ENCODE measurements at regions of chr11 and their contacts with region 1.

Region 1: DNA sequence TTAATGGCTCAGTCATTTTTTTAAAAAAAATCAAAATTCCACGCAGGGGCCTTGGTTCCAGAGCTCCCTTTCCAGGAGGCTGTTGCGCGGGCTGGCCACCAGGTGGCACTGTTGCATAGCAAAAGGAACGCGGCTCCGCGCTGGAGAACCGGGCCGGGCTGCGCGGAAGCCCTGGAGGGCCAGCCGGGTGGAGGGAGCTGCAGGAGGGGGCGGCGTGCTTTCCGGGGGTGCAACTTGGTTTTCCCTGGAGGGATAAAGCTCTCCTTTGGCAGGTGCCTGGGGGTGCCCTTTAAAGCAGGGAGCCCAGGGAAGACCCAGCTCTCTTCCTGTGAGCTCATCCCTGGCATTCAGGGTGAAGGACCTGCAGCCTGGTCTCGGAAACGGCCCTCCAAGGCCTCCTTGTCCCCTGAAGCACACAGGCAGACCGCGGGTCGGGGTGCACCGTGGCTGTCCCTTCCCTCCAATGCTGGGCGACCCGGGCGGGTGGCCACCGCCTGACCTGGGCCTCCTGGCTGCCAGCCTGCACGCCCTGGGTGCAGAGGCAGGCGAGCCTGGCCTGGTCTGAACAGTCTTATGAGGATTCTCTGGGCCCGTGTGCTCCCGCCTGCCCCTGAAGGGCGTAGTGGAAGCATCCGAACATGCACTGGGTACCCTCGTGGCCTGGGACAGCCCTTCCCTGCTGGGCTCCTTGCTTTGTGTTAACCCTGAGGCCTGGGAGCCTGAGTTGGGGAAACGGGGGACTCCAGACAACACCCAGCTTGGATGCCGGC is 23.4 kb downstream of the KRTAP5-5 start:
- DNase-seq: peak; percentile 78
- ATAC-seq: peak; percentile 91
- H3K4me3 ChIP-seq: no peak overlapping the region
- H3K4me3 Mint-ChIP-seq: no peak overlapping the region
- H3K27ac ChIP-seq: no peak overlapping the region
- H3K27ac Mint-ChIP-seq: no peak overlapping the region
- H3K4me1 ChIP-seq: peaks cover 0 to 6% of the 10 kb centered on the region in 2 donors
- H3K4me1 Mint-ChIP-seq: no peaks in the 10 kb centered on the region
- H3K27me3 ChIP-seq: peaks cover 0 to 22% (median 4%) of the 10 kb centered on the region in 4 experiments
- H3K27me3 Mint-ChIP-seq: peaks cover 39% of the 10 kb centered on the region
- CTCF ChIP-seq: peak; percentile 97

Region 2: GRCh38 chr11:1546536-1547400 is 106.2 kb before region 1 on chr11:
- CTCF ChIA-PET with region 1: interaction called, 13 read pairs
- POLR2A ChIA-PET with region 1: no interaction called
- intact Hi-C with region 1: no loop called
- DNase-seq: peak; percentile 74
- ATAC-seq: peak; percentile 63
- H3K4me3 ChIP-seq: peak overlapping the region in 3 of 5 experiments; percentile 36 to 59 (median 47)
- H3K4me3 Mint-ChIP-seq: peak overlapping the region; percentile 59
- H3K27ac ChIP-seq: no peak overlapping the region
- H3K27ac Mint-ChIP-seq: no peak overlapping the region
- H3K4me1 ChIP-seq: peaks cover 23 to 27% of the 10 kb centered on the region in 2 donors
- H3K4me1 Mint-ChIP-seq: peaks cover 16% of the 10 kb centered on the region
- H3K27me3 ChIP-seq: peaks cover 0 to 58% (median 17%) of the 10 kb centered on the region in 4 experiments
- H3K27me3 Mint-ChIP-seq: peaks cover 12% of the 10 kb centered on the region
- CTCF ChIP-seq: peak; percentile 77

Region 3: DNA sequence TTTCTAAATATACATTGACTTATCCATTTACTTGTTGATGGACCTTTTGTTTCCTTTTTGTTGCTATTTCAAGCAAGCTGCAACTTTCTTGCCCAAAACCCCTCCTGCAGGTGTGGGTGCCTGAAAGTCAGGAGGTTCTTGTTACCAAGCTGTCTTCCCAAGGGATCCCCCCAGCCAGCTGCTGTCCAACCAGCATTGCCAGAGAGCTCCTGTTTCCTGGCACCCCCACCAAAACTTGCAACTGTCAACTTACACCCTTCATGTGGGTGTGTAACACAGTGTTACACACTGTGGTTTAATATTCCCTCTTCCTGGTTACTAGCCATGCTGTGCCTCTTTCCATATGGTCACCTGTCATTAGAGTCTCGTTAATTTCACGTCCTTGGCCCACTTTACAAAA is 66.3 kb before region 1 on chr11:
- CTCF ChIA-PET with region 1: no interaction called
- POLR2A ChIA-PET with region 1: no interaction called
- intact Hi-C with region 1: no loop called
- DNase-seq: no peak
- ATAC-seq: no peak
- H3K4me3 ChIP-seq: no peak overlapping the region
- H3K4me3 Mint-ChIP-seq: no peak overlapping the region
- H3K27ac ChIP-seq: no peak overlapping the region
- H3K27ac Mint-ChIP-seq: peak overlapping the region; percentile 59
- H3K4me1 ChIP-seq: peaks cover 8 to 34% of the 10 kb centered on the region in 2 donors
- H3K4me1 Mint-ChIP-seq: peaks cover 25% of the 10 kb centered on the region
- H3K27me3 ChIP-seq: peaks cover 0 to 28% (median 1%) of the 10 kb centered on the region in 4 experiments
- H3K27me3 Mint-ChIP-seq: peaks cover 17% of the 10 kb centered on the region
- CTCF ChIP-seq: no peak

Region 4: DNA sequence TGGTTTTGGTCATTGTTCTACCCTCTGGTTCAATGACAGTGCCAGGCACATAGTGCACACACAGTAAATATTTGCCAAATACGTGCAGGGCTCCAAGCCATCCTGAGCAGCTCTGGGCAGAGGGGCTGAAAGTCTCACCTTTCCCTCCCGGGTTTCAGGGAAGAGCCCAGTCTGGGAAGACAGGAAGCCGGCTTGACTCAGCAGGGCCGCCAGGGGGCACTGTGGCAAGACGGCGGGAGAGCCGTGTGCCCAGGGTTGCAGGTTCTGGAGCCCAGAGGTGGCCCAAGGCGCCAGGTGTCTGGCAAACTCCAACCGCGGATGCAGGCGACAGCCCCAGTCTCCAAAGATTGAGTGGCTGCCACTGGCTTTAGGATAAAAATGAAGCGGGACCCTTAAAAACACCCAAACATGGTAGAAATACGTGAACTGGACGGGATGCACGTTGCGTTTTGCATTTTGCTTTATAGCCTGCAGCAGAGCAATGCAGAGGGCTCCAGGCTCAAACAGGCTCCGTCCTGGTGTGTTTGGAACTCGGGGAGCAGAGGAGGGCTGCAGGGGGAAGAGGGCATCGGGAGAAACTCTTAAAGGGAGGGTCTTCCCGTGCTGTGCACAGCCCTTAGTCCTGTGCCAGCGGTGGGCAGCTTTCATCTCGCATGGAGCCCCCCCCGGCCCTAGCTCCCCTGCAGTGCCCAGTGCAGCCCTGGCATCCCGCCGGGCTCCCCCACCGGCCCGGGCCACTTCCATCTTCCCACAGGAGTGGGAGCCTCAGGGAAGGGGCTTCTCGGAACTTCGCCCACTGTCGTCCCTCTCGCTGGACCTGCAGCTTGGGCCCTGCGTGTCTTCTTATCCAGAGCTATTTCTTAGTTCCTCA is 12.6 kb before region 1 on chr11:
- CTCF ChIA-PET with region 1: interaction called, 18 read pairs
- POLR2A ChIA-PET with region 1: no interaction called
- intact Hi-C with region 1: no loop called
- DNase-seq: peak; percentile 47
- ATAC-seq: no peak
- H3K4me3 ChIP-seq: no peak overlapping the region
- H3K4me3 Mint-ChIP-seq: no peak overlapping the region
- H3K27ac ChIP-seq: no peak overlapping the region
- H3K27ac Mint-ChIP-seq: no peak overlapping the region
- H3K4me1 ChIP-seq: no peaks in the 10 kb centered on the region
- H3K4me1 Mint-ChIP-seq: no peaks in the 10 kb centered on the region
- H3K27me3 ChIP-seq: peaks cover 0 to 21% (median 2%) of the 10 kb centered on the region in 4 experiments
- H3K27me3 Mint-ChIP-seq: peaks cover 26% of the 10 kb centered on the region
- CTCF ChIP-seq: peak; percentile 81

Region 5: GRCh38 chr11:1669661-1670218 is 16.8 kb after region 1 on chr11:
- CTCF ChIA-PET with region 1: no interaction called
- POLR2A ChIA-PET with region 1: no interaction called
- intact Hi-C with region 1: no loop called
- DNase-seq: no peak
- ATAC-seq: no peak
- H3K4me3 ChIP-seq: no peak overlapping the region
- H3K4me3 Mint-ChIP-seq: no peak overlapping the region
- H3K27ac ChIP-seq: no peak overlapping the region
- H3K27ac Mint-ChIP-seq: no peak overlapping the region
- H3K4me1 ChIP-seq: no peaks in the 10 kb centered on the region
- H3K4me1 Mint-ChIP-seq: no peaks in the 10 kb centered on the region
- H3K27me3 ChIP-seq: peaks cover 0 to 16% (median 2%) of the 10 kb centered on the region in 4 experiments
- H3K27me3 Mint-ChIP-seq: peaks cover 28% of the 10 kb centered on the region
- CTCF ChIP-seq: no peak

Region 6: GRCh38 chr11:1679881-1680280 is 26.9 kb after region 1 on chr11:
- CTCF ChIA-PET with region 1: interaction called, 10 read pairs
- POLR2A ChIA-PET with region 1: no interaction called
- intact Hi-C with region 1: no loop called
- DNase-seq: no peak
- ATAC-seq: no peak
- H3K4me3 ChIP-seq: no peak overlapping the region
- H3K4me3 Mint-ChIP-seq: no peak overlapping the region
- H3K27ac ChIP-seq: no peak overlapping the region
- H3K27ac Mint-ChIP-seq: no peak overlapping the region
- H3K4me1 ChIP-seq: no peaks in the 10 kb centered on the region
- H3K4me1 Mint-ChIP-seq: no peaks in the 10 kb centered on the region
- H3K27me3 ChIP-seq: peaks cover 0 to 2% (median 0%) of the 10 kb centered on the region in 4 experiments
- H3K27me3 Mint-ChIP-seq: peaks cover 21% of the 10 kb centered on the region
- CTCF ChIP-seq: no peak

Region 7: GRCh38 chr11:1882519-1883238 is 229.7 kb after region 1 on chr11:
- CTCF ChIA-PET with region 1: interaction called, 10 read pairs
- POLR2A ChIA-PET with region 1: no interaction called
- intact Hi-C with region 1: no loop called
- DNase-seq: peak; percentile 86
- ATAC-seq: peak; percentile 74
- H3K4me3 ChIP-seq: no peak overlapping the region
- H3K4me3 Mint-ChIP-seq: peak overlapping the region; percentile 34
- H3K27ac ChIP-seq: no peak overlapping the region
- H3K27ac Mint-ChIP-seq: peak overlapping the region; percentile 75
- H3K4me1 ChIP-seq: peaks cover 32 to 46% of the 10 kb centered on the region in 2 donors
- H3K4me1 Mint-ChIP-seq: peaks cover 38% of the 10 kb centered on the region
- H3K27me3 ChIP-seq: no peaks in the 10 kb centered on the region
- H3K27me3 Mint-ChIP-seq: no peaks in the 10 kb centered on the region
- CTCF ChIP-seq: peak; percentile 87

Region 8: GRCh38 chr11:2002807-2003206 is 349.9 kb after region 1 on chr11:
- CTCF ChIA-PET with region 1: interaction called, 57 read pairs
- POLR2A ChIA-PET with region 1: no interaction called
- intact Hi-C with region 1: no loop called
- DNase-seq: no peak
- ATAC-seq: peak; percentile 46
- H3K4me3 ChIP-seq: no peak overlapping the region
- H3K4me3 Mint-ChIP-seq: no peak overlapping the region
- H3K27ac ChIP-seq: no peak overlapping the region
- H3K27ac Mint-ChIP-seq: no peak overlapping the region
- H3K4me1 ChIP-seq: no peaks in the 10 kb centered on the region
- H3K4me1 Mint-ChIP-seq: no peaks in the 10 kb centered on the region
- H3K27me3 ChIP-seq: no peaks in the 10 kb centered on the region
- H3K27me3 Mint-ChIP-seq: no peaks in the 10 kb centered on the region
- CTCF ChIP-seq: no peak

Measured in B cell (primary cell).